ENCODE measurements at regions of chr4 and their contacts with region 1.

Region 1: GRCh38 chr4:30714408-30715027 is 5.7 kb upstream of the PCDH7 start:
- DNase-seq: no peak
- ATAC-seq: peak; percentile 49
- H3K4me3 ChIP-seq: no peak overlapping the region
- H3K27ac ChIP-seq: no peak overlapping the region
- H3K4me1 ChIP-seq: no peaks in the 10 kb centered on the region
- H3K27me3 ChIP-seq: peaks cover 8 to 15% of the 10 kb centered on the region in 2 experiments
- CTCF ChIP-seq: peak; percentile 46 to 68 (median 47); a peak in 5 of 6 replicates
- EP300 ChIP-seq: no peak
- POLR2A ChIP-seq: no peak
- RAD21 ChIP-seq: peak; percentile 34

Region 2: DNA sequence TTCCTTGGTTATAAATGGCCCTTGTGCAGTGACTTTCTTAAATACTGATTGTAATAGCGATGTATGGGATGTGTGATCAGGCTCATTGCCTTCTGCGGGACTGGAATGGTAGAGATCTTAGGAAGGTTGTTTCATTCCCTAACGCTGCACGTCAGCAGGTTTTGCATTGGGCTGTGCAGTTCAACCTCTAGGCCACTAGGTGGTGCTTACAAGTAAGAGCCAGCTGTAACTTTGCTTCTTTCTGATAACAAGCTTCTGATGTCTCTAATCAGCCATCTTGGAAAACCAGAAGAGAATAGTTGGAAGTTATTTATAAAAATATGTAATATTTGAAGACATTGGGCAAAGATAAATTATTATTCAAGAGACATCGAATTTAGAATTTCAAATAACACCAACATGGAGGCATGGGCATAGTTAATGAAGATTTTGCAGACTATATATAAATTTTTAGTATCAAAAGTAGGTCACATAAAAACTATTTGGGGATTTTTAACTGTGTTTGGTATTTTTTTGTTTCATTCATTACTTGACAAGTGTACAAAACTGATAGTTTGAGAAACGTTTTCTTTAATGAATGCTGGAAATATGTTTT is 334.0 kb before region 1 on chr4:
- CTCF ChIA-PET with region 1: interaction called, 5 read pairs
- POLR2A ChIA-PET with region 1: interaction called, 3 read pairs
- RAD21 ChIA-PET with region 1: no interaction called
- SMC1A ChIA-PET with region 1: no interaction called
- in situ Hi-C with region 1: no loop called
- intact Hi-C with region 1: loop called (anchors 10 kb)
- DNase-seq: no peak
- ATAC-seq: peak; percentile 91
- H3K4me3 ChIP-seq: no peak overlapping the region
- H3K27ac ChIP-seq: no peak overlapping the region
- H3K4me1 ChIP-seq: no peaks in the 10 kb centered on the region
- H3K27me3 ChIP-seq: no peaks in the 10 kb centered on the region
- CTCF ChIP-seq: peak; percentile 75 to 93 (median 82)
- EP300 ChIP-seq: no peak
- POLR2A ChIP-seq: no peak
- RAD21 ChIP-seq: peak; percentile 75

Region 3: GRCh38 chr4:30402276-30402675 is 312.2 kb before region 1 on chr4:
- CTCF ChIA-PET with region 1: no interaction called
- POLR2A ChIA-PET with region 1: no interaction called
- RAD21 ChIA-PET with region 1: no interaction called
- SMC1A ChIA-PET with region 1: no interaction called
- in situ Hi-C with region 1: no loop called
- intact Hi-C with region 1: no loop called
- DNase-seq: no peak
- ATAC-seq: no peak
- H3K4me3 ChIP-seq: no peak overlapping the region
- H3K27ac ChIP-seq: no peak overlapping the region
- H3K4me1 ChIP-seq: no peaks in the 10 kb centered on the region
- H3K27me3 ChIP-seq: no peaks in the 10 kb centered on the region
- CTCF ChIP-seq: no peak
- EP300 ChIP-seq: no peak
- POLR2A ChIP-seq: no peak
- RAD21 ChIP-seq: no peak

Region 4: DNA sequence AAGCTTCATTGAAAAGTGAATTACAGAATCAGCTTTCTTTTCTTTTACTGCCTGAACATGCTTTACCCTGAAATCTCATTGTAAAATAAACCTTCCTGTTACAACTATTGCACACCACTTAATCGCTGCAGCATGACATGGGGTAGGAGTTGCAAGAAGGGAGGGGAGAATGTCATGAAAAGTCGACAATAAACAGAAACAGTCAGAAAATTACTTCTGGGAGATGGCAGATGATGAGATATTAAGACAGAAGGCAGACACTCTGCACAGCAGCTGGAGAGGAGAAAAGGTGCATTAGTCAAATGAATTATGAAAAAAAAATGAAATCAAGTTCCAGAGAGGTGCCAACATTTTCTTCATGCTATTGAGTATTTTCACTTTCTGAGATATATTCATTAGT is 293.3 kb after region 1 on chr4:
- CTCF ChIA-PET with region 1: no interaction called
- POLR2A ChIA-PET with region 1: no interaction called
- RAD21 ChIA-PET with region 1: no interaction called
- SMC1A ChIA-PET with region 1: no interaction called
- in situ Hi-C with region 1: no loop called
- intact Hi-C with region 1: loop called (anchors 10 kb)
- DNase-seq: no peak
- ATAC-seq: no peak
- H3K4me3 ChIP-seq: no peak overlapping the region
- H3K27ac ChIP-seq: no peak overlapping the region
- H3K4me1 ChIP-seq: no peaks in the 10 kb centered on the region
- H3K27me3 ChIP-seq: no peaks in the 10 kb centered on the region
- CTCF ChIP-seq: no peak
- EP300 ChIP-seq: no peak
- POLR2A ChIP-seq: no peak
- RAD21 ChIP-seq: no peak

Measured in GM12878 (cell line).